ENCODE measurements at regions of chr6 and their contacts with region 1.

Region 1: GRCh38 chr6:133916650-133917151 is 27.8 kb downstream of the TCF21 start:
- DNase-seq: peak; percentile 93
- H3K4me3 ChIP-seq: no peak overlapping the region
- H3K27ac ChIP-seq: no peak overlapping the region
- H3K4me1 ChIP-seq: no peaks in the 10 kb centered on the region
- H3K27me3 ChIP-seq: no peaks in the 10 kb centered on the region
- CTCF ChIP-seq: peak; percentile 78

Region 2: GRCh38 chr6:133568970-133569889 is 347.5 kb before region 1 on chr6:
- intact Hi-C with region 1: loop called (anchors 5 kb)
- DNase-seq: no peak
- H3K4me3 ChIP-seq: no peak overlapping the region
- H3K27ac ChIP-seq: no peak overlapping the region
- H3K4me1 ChIP-seq: no peaks in the 10 kb centered on the region
- H3K27me3 ChIP-seq: no peaks in the 10 kb centered on the region
- CTCF ChIP-seq: peak; percentile 70

Region 3: DNA sequence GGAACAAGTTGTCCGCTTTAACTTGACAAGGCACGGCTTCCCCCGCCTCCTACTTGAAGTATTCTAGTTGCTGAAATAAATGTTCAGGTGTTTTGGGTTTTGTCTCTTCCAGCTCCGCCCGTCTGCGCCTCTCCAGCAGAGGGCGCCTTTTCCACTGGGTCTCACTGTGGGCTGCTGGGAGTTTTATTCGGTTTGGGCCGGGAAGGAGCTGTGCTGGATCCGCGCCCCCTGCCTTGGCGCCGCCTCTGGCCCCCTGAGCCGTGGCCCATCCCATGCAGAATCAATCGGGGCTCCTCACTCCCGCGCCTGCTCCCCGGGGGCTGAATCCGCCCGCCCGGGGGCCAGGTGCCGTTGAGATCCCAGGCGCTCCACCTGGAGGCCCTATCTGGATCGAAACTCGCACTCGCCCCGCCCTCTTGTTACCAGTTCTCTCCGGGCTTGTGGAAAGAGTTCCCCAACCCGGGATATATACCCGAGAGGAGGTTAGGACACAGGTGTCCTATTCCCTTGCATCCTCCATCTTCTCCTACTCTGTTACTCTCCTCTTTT is 78.8 kb before region 1 on chr6:
- intact Hi-C with region 1: loop called (anchors 5 kb)
- DNase-seq: peak; percentile 75
- H3K4me3 ChIP-seq: peak overlapping the region; percentile 38
- H3K27ac ChIP-seq: no peak overlapping the region
- H3K4me1 ChIP-seq: no peaks in the 10 kb centered on the region
- H3K27me3 ChIP-seq: no peaks in the 10 kb centered on the region
- CTCF ChIP-seq: peak; percentile 73

Region 4: DNA sequence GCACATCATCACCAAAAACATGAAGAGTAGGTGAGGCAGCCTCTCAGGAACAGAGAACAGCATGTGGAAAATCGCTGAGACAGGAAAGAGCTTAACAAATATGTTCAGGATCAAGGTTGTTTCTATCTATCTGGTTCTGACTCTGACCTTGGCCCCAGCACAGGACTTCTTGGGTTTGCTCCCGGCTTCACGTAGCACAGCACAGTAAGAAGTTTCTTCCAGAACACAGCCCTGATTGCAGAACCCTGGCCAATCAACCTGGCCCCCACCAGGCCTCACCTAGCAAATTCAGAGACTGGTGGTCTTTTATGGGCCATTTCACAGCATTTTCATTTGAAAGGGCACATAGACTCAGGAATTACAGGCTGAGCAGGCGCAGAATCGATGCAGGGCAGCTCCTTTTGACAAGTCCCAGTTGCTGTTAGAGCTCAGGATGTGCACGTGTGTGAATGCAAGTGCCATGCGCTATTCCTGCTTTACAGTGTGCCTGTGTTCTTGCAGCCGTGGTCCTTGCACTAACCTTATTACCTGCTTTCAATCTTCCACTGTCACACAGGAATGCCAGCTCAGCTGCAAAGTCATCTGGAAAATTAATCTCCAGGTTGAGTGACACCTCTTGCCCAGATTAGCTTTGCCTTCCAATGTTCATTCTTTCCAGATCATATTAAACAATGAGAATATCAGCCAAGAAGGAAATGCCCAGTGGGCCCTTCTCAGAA is 236.2 kb after region 1 on chr6:
- intact Hi-C with region 1: no loop called
- DNase-seq: no peak
- H3K4me3 ChIP-seq: no peak overlapping the region
- H3K27ac ChIP-seq: no peak overlapping the region
- H3K4me1 ChIP-seq: no peaks in the 10 kb centered on the region
- H3K27me3 ChIP-seq: no peaks in the 10 kb centered on the region
- CTCF ChIP-seq: no peak

Measured in colonic mucosa (tissue), 4 donors.